Calu3 (cell line): ENCODE measurements at regions of chr7 and their contacts with region 1.

Region 1: DNA sequence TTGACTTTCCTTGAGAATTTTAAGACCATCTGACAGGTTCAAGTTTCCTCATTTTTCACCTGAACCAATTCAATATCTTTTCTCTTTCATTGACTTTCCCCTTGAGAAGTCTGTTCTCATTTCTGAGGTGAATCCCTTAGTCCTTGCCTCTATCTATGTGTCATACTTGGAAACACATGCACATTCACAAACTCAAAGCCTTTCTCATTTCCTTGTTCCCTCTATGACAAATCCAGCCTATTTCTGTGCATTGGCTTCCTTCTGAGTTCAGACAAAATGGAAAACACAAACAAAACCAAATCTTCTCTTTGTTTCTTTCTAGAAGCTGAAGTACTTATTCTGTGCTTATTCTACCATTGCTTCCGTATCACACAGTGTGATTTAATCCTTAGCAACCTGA is 13.8 kb downstream of the PTTG1IP2 start:
- DNase-seq: no peak
- H3K4me3 Mint-ChIP-seq: no peak overlapping the region
- H3K27ac Mint-ChIP-seq: no peak overlapping the region
- H3K4me1 Mint-ChIP-seq: no peaks in the 10 kb centered on the region
- H3K27me3 Mint-ChIP-seq: no peaks in the 10 kb centered on the region
- CTCF ChIP-seq: no peak

Region 2: DNA sequence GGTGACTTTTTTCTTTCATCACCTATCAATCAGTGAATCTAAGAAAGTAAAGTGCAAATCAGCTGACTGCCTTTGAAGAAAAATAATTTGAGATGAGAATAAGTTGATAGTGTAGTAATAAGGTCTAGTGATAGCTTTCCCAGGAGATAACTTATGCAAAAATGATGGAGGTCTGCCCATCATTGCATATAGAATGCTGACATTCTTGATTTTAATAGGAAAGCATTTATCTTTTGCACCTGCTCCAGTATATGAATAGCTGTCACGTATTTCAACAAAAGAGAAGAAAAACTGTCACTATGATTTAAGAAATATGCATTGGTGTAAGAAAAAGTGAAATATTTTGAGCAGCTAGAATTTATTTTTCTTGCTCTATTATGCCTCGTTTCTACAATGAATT is 33.0 kb after region 1 on chr7:
- CTCF ChIA-PET with region 1: no interaction called
- intact Hi-C with region 1: loop called (anchors 2 kb)
- DNase-seq: no peak
- H3K4me3 Mint-ChIP-seq: no peak overlapping the region
- H3K27ac Mint-ChIP-seq: no peak overlapping the region
- H3K4me1 Mint-ChIP-seq: peaks cover 12% of the 10 kb centered on the region
- H3K27me3 Mint-ChIP-seq: no peaks in the 10 kb centered on the region
- CTCF ChIP-seq: no peak

Region 3: GRCh38 chr7:90859521-90859920 is 376.3 kb after region 1 on chr7:
- CTCF ChIA-PET with region 1: no interaction called
- intact Hi-C with region 1: no loop called
- DNase-seq: no peak
- H3K4me3 Mint-ChIP-seq: no peak overlapping the region
- H3K27ac Mint-ChIP-seq: no peak overlapping the region
- H3K4me1 Mint-ChIP-seq: no peaks in the 10 kb centered on the region
- H3K27me3 Mint-ChIP-seq: no peaks in the 10 kb centered on the region
- CTCF ChIP-seq: no peak

Region 4: GRCh38 chr7:91029688-91030087 is 546.4 kb after region 1 on chr7:
- CTCF ChIA-PET with region 1: interaction called, 10 read pairs
- intact Hi-C with region 1: no loop called
- DNase-seq: no peak
- H3K4me3 Mint-ChIP-seq: no peak overlapping the region
- H3K27ac Mint-ChIP-seq: no peak overlapping the region
- H3K4me1 Mint-ChIP-seq: no peaks in the 10 kb centered on the region
- H3K27me3 Mint-ChIP-seq: no peaks in the 10 kb centered on the region
- CTCF ChIP-seq: no peak